CD8-positive, alpha-beta T cell (primary cell): ENCODE measurements at regions of chr1 and their contacts with region 1.

Region 1: GRCh38 chr1:220810179-220810653 is 23.5 kb downstream of the MTARC1 start:
- DNase-seq: peak; percentile 21 to 80 (median 70)
- ATAC-seq: peak; percentile 98
- H3K4me3 ChIP-seq: peak overlapping the region in 1 of 2 experiments; percentile 8
- H3K4me3 Mint-ChIP-seq: peak overlapping the region; percentile 75
- H3K27ac ChIP-seq: no peak overlapping the region
- H3K27ac Mint-ChIP-seq: no peak overlapping the region
- H3K4me1 ChIP-seq: no peaks in the 10 kb centered on the region
- H3K4me1 Mint-ChIP-seq: peaks cover 6% of the 10 kb centered on the region
- H3K27me3 ChIP-seq: no peaks in the 10 kb centered on the region
- H3K27me3 Mint-ChIP-seq: peaks cover 23% of the 10 kb centered on the region
- CTCF ChIP-seq: peak; percentile 92

Region 2: DNA sequence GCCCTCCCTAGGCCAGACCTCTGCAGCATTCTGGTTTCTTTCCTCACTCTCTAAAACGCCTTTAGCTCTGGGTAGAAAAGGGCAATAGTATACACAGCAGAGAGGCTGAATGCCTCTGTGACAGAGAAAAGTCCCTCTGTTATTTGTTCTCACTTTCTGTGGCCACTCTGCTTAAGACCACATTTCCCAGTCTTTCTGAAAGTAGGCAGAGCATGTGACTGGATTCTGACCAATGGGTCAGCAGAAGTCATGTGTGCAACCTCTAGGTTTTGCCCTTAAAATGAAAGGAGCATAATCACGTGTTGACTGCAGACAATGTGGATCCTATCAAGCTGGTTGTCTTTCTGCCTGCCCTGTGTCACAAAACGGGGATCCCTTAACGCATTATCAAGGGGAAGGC is 362.0 kb before region 1 on chr1:
- CTCF ChIA-PET with region 1: no interaction called
- POLR2A ChIA-PET with region 1: no interaction called
- intact Hi-C with region 1: no loop called
- DNase-seq: no peak
- ATAC-seq: no peak
- H3K4me3 ChIP-seq: no peak overlapping the region
- H3K4me3 Mint-ChIP-seq: no peak overlapping the region
- H3K27ac ChIP-seq: no peak overlapping the region
- H3K27ac Mint-ChIP-seq: no peak overlapping the region
- H3K4me1 ChIP-seq: no peaks in the 10 kb centered on the region
- H3K4me1 Mint-ChIP-seq: no peaks in the 10 kb centered on the region
- H3K27me3 ChIP-seq: peaks cover 0 to 2% of the 10 kb centered on the region in 2 experiments
- H3K27me3 Mint-ChIP-seq: peaks cover 22% of the 10 kb centered on the region
- CTCF ChIP-seq: no peak

Region 3: DNA sequence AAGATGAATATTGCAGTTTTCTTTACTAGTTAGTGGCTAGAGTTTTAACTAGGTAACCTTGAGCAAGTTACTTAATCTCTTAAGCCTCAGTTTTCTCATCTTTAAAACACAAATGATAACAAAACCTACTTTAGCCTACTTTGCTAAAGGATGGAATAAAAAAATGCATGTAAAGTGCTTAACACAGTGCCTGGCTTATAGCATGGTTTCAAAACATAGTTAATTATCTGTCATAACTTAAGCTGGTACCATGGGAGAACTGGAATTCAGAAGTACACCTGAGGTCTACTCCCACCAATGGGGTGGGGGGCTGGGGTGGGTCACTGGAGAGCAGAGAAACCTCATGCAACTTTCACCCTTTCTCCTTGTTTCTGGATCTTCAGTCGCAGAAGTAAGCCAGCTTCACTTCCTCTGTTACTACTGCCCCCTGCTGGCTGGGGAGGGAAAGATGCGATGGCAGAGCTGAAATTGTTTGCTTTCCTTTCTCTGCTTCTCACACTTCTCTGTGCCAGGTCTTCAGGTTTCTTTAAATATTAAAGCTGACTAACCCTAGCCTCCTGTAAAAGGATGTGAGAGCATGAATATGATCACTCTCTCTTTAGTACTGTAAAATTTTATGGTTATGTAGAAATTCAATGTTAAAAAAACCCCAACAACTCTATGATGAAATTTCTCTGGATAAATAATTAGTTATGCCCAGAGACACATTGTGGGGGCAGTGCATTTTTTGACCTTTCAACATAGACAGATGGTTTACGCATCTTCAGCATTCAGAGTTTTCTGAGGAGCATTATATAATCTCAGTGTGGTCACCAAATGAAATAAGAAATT is 393.2 kb after region 1 on chr1:
- CTCF ChIA-PET with region 1: no interaction called
- POLR2A ChIA-PET with region 1: no interaction called
- intact Hi-C with region 1: loop called in 1 of 2 experiments (anchors 2 kb)
- DNase-seq: peak; percentile 10 to 68 (median 54)
- ATAC-seq: no peak
- H3K4me3 ChIP-seq: no peak overlapping the region
- H3K4me3 Mint-ChIP-seq: no peak overlapping the region
- H3K27ac ChIP-seq: no peak overlapping the region
- H3K27ac Mint-ChIP-seq: no peak overlapping the region
- H3K4me1 ChIP-seq: no peaks in the 10 kb centered on the region
- H3K4me1 Mint-ChIP-seq: no peaks in the 10 kb centered on the region
- H3K27me3 ChIP-seq: no peaks in the 10 kb centered on the region
- H3K27me3 Mint-ChIP-seq: peaks cover 6% of the 10 kb centered on the region
- CTCF ChIP-seq: peak; percentile 66

Region 4: DNA sequence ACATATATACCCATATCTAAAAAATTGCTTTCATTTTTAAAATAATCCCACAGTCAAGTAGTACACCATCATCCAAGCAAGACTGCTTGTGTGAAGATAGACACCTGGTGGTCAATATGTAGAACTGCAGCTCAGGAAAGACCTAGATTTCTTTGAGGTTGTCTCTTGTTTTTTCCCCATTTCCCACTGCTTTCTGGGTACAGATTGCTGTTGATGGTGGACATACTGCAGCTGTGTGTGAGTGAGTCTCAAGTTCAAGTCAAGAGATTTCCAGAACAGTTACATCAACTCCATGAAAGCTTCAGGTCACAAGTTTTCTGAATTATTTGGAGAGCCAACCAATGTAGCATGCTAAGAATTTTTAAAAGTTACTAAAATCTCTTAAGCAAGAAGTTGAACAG is 625.3 kb after region 1 on chr1:
- CTCF ChIA-PET with region 1: interaction called, 4 read pairs
- POLR2A ChIA-PET with region 1: no interaction called
- intact Hi-C with region 1: loop called (anchors 1 kb)
- DNase-seq: peak in 2 of 9 experiments; percentile 36 to 58
- ATAC-seq: peak; percentile 47
- H3K4me3 ChIP-seq: no peak overlapping the region
- H3K4me3 Mint-ChIP-seq: no peak overlapping the region
- H3K27ac ChIP-seq: no peak overlapping the region
- H3K27ac Mint-ChIP-seq: no peak overlapping the region
- H3K4me1 ChIP-seq: no peaks in the 10 kb centered on the region
- H3K4me1 Mint-ChIP-seq: peaks cover 16% of the 10 kb centered on the region
- H3K27me3 ChIP-seq: no peaks in the 10 kb centered on the region
- H3K27me3 Mint-ChIP-seq: peaks cover 3% of the 10 kb centered on the region
- CTCF ChIP-seq: peak; percentile 96

Region 5: DNA sequence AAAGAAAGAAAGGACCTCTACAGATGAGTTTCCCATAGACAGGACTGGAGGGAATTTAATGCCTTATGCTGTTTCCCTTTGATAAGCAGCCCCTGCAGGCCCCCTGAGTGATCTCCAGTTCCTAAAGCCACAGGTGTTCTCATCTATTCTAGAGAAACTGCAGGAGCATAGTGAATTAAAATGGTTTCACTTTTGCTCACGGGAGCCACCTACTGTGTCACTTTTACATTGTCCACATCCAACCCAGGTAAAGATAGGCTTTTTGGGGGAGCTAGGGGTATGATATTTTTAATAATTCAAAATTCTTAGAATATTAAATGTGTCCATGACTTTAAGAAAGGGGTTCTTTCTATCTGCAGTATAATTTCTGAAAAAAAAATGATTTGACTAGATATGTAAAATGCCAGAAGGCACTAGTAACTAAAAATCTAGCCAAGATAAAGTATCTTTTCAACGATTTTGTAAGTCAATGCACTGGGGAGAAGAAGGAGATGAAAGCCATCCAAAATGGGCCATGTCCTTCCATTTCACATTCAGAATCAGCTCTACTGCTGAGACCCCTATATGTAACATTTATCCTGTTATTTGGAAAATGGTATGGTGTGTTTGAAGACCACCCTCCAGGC is 1199.0 kb after region 1 on chr1:
- CTCF ChIA-PET with region 1: no interaction called
- POLR2A ChIA-PET with region 1: no interaction called
- intact Hi-C with region 1: loop called in 1 of 2 experiments (anchors 10 kb)
- DNase-seq: peak in 8 of 9 experiments; percentile 3 to 65 (median 17)
- ATAC-seq: peak; percentile 57
- H3K4me3 ChIP-seq: no peak overlapping the region
- H3K4me3 Mint-ChIP-seq: no peak overlapping the region
- H3K27ac ChIP-seq: no peak overlapping the region
- H3K27ac Mint-ChIP-seq: no peak overlapping the region
- H3K4me1 ChIP-seq: no peaks in the 10 kb centered on the region
- H3K4me1 Mint-ChIP-seq: no peaks in the 10 kb centered on the region
- H3K27me3 ChIP-seq: no peaks in the 10 kb centered on the region
- H3K27me3 Mint-ChIP-seq: no peaks in the 10 kb centered on the region
- CTCF ChIP-seq: peak; percentile 60